ENCODE measurements at regions of chr2 and their contacts with region 1.

Region 1: GRCh38 chr2:41869542-41870264 is 178.1 kb upstream of the PKDCC start:
- DNase-seq: peak; percentile 68 to 83 (median 71)
- ATAC-seq: peak; percentile 73 to 91 (median 87)
- H3K4me3 ChIP-seq: no peak overlapping the region
- H3K27ac ChIP-seq: no peak overlapping the region
- H3K4me1 ChIP-seq: peaks cover 0 to 15% (median 4%) of the 10 kb centered on the region in 12 donors
- H3K27me3 ChIP-seq: no peaks in the 10 kb centered on the region
- CTCF ChIP-seq: peak; percentile 76 to 98 (median 88)
- POLR2A ChIP-seq: no peak

Region 2: DNA sequence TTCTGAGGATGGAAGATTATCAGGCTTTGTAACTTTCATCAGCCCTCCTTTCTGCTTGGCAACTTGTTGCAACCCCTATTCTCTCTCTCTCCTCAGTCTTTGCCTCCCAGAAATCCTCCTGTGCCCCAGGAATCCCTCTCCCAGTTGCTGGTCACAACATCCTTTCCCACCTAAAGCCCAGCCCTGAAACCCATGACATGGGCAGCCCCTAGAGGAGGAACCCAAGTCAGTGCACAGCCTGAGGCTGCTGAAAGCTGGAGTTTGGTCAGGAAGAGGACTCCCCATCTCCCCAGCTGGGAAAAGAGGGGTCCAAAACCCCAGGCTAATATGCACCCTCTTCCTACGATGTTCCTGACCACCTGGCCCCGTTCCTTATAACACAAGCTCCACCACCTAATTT is 207.6 kb after region 1 on chr2:
- intact Hi-C with region 1: loop called in 1 of 10 experiments (anchors 2 kb)
- DNase-seq: no peak
- ATAC-seq: peak in 2 of 4 donors; percentile 33 to 63
- H3K4me3 ChIP-seq: no peak overlapping the region
- H3K27ac ChIP-seq: no peak overlapping the region
- H3K4me1 ChIP-seq: peaks cover 0 to 15% (median 6%) of the 10 kb centered on the region in 12 donors
- H3K27me3 ChIP-seq: no peaks in the 10 kb centered on the region
- CTCF ChIP-seq: peak in 7 of 12 donors; percentile 5 to 42 (median 31)
- POLR2A ChIP-seq: no peak

Region 3: GRCh38 chr2:42086500-42086953 is 216.8 kb after region 1 on chr2:
- intact Hi-C with region 1: loop called (anchors 1 to 2 kb)
- DNase-seq: peak in 2 of 5 donors; percentile 35 to 39
- ATAC-seq: peak in 3 of 4 donors; percentile 57 to 67 (median 58)
- H3K4me3 ChIP-seq: no peak overlapping the region
- H3K27ac ChIP-seq: no peak overlapping the region
- H3K4me1 ChIP-seq: peaks cover 0 to 21% (median 0%) of the 10 kb centered on the region in 12 donors
- H3K27me3 ChIP-seq: no peaks in the 10 kb centered on the region
- CTCF ChIP-seq: peak; percentile 49 to 82 (median 76)
- POLR2A ChIP-seq: no peak

Region 4: GRCh38 chr2:42238644-42239288 is 369.1 kb after region 1 on chr2:
- intact Hi-C with region 1: loop called in 1 of 10 experiments (anchors 10 kb)
- DNase-seq: peak in 4 of 5 donors; percentile 25 to 50 (median 30)
- ATAC-seq: peak in 3 of 4 donors; percentile 89 to 92 (median 91)
- H3K4me3 ChIP-seq: no peak overlapping the region
- H3K27ac ChIP-seq: no peak overlapping the region
- H3K4me1 ChIP-seq: peaks cover 0 to 40% (median 11%) of the 10 kb centered on the region in 12 donors
- H3K27me3 ChIP-seq: no peaks in the 10 kb centered on the region
- CTCF ChIP-seq: peak in 11 of 12 donors; percentile 26 to 64 (median 53)
- POLR2A ChIP-seq: no peak

Region 5: GRCh38 chr2:42328148-42328833 is 458.6 kb after region 1 on chr2:
- intact Hi-C with region 1: loop called in 1 of 10 experiments (anchors 10 kb)
- DNase-seq: no peak
- ATAC-seq: peak in 1 of 4 donors; percentile 34
- H3K4me3 ChIP-seq: no peak overlapping the region
- H3K27ac ChIP-seq: no peak overlapping the region
- H3K4me1 ChIP-seq: no peaks in the 10 kb centered on the region
- H3K27me3 ChIP-seq: no peaks in the 10 kb centered on the region
- CTCF ChIP-seq: peak in 11 of 12 donors; percentile 22 to 57 (median 43)
- POLR2A ChIP-seq: no peak